Activated T-helper 1 cell treated with anti-CD3 and anti-CD28 coated beads, Interleukin-12 subunit alpha, Interleukin-12 subunit beta, Interleukin-2, Interleukin-4 antibody, amounts not matched to agents 30 ng/mL and 10 ng/mL and 1 ng/mL, durations not matched to agents 14 hours and 24 hours and 36 hours (primary cell): ENCODE measurements at regions of chr2 and their contacts with region 1.

Region 1: GRCh38 chr2:174634130-174635014 is 36.8 kb upstream of the WIPF1 start:
- DNase-seq: peak; percentile 49
- H3K4me3 Mint-ChIP-seq: peak overlapping the region; percentile 94
- H3K27ac Mint-ChIP-seq: peak overlapping the region; percentile 98
- H3K4me1 Mint-ChIP-seq: peaks cover 84% of the 10 kb centered on the region
- H3K27me3 Mint-ChIP-seq: no peaks in the 10 kb centered on the region

Region 2: GRCh38 chr2:174568425-174568824 is 65.9 kb before region 1 on chr2:
- intact Hi-C with region 1: loop called (anchors 2 kb)
- DNase-seq: no peak
- H3K4me3 Mint-ChIP-seq: no peak overlapping the region
- H3K27ac Mint-ChIP-seq: peak overlapping the region; percentile 45
- H3K4me1 Mint-ChIP-seq: peaks cover 62% of the 10 kb centered on the region
- H3K27me3 Mint-ChIP-seq: no peaks in the 10 kb centered on the region

Region 3: GRCh38 chr2:174593574-174594203 is 40.7 kb before region 1 on chr2:
- intact Hi-C with region 1: loop called (anchors 1 kb)
- DNase-seq: peak; percentile 69
- H3K4me3 Mint-ChIP-seq: peak overlapping the region; percentile 86
- H3K27ac Mint-ChIP-seq: peak overlapping the region; percentile 98
- H3K4me1 Mint-ChIP-seq: peaks cover 58% of the 10 kb centered on the region
- H3K27me3 Mint-ChIP-seq: no peaks in the 10 kb centered on the region

Region 4: DNA sequence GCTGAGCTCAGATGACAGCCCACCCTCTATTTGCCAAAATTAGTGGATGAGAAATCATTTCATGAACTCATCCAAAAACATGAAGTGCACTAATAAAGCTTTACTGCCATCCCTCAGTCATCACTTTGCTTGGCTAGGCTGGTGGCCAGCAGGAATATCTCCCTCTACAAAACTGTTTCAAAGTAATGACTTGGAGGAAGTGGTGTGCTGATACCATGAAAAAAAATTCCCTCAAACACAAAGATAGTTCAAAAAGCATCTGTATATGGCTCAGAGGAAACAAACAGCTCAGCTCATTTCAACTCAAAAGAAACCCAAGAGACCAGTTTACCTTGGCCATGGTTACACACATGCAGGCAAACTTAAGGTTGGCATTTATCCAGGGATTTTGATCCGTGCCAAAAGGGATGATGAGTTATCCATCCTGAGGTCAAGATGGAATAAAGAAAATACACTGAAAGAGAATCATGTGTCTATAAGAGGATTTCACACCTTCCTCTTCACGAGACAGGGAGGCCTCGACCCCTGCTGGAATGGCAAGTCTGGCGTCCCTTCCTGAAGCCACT is 18.4 kb before region 1 on chr2:
- intact Hi-C with region 1: loop called (anchors 1 kb)
- DNase-seq: no peak
- H3K4me3 Mint-ChIP-seq: peak overlapping the region; percentile 60
- H3K27ac Mint-ChIP-seq: peak overlapping the region; percentile 94
- H3K4me1 Mint-ChIP-seq: peaks cover 92% of the 10 kb centered on the region
- H3K27me3 Mint-ChIP-seq: no peaks in the 10 kb centered on the region

Region 5: GRCh38 chr2:174682578-174683391 is 48.4 kb after region 1 on chr2:
- intact Hi-C with region 1: loop called (anchors 1 kb)
- DNase-seq: peak; percentile 57
- H3K4me3 Mint-ChIP-seq: peak overlapping the region; percentile 96
- H3K27ac Mint-ChIP-seq: peak overlapping the region; percentile 95
- H3K4me1 Mint-ChIP-seq: peaks cover 74% of the 10 kb centered on the region
- H3K27me3 Mint-ChIP-seq: no peaks in the 10 kb centered on the region

Region 6: DNA sequence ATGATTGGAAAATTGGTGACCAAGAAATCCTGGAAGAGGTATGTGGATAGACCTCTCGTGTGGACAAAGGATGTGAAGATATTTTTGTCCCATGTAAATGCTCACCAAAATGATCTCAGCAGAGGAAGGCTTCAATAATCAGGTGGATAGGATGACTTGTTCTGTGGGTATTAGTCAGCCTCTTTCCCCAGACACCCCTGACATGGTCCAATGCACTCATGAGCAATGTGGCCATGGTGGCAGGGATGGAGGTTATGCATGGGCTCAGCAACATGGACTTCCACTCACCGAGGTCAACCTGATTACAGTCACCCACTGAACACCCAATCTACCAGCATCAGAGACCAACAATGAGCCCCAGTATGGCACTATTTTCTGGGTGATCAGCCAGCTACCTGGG is 109.7 kb after region 1 on chr2:
- intact Hi-C with region 1: no loop called
- DNase-seq: no peak
- H3K4me3 Mint-ChIP-seq: no peak overlapping the region
- H3K27ac Mint-ChIP-seq: no peak overlapping the region
- H3K4me1 Mint-ChIP-seq: peaks cover 8% of the 10 kb centered on the region
- H3K27me3 Mint-ChIP-seq: peaks cover 8% of the 10 kb centered on the region